Dendritic cell treated with granulocyte-macrophage colony-stimulating factor and Interleukin-4, amounts not matched to agents 40 ng/mL and 50 ng/mL, for 4 days (primary cell): ENCODE measurements at regions of chr4 and their contacts with region 1.

Region 1: DNA sequence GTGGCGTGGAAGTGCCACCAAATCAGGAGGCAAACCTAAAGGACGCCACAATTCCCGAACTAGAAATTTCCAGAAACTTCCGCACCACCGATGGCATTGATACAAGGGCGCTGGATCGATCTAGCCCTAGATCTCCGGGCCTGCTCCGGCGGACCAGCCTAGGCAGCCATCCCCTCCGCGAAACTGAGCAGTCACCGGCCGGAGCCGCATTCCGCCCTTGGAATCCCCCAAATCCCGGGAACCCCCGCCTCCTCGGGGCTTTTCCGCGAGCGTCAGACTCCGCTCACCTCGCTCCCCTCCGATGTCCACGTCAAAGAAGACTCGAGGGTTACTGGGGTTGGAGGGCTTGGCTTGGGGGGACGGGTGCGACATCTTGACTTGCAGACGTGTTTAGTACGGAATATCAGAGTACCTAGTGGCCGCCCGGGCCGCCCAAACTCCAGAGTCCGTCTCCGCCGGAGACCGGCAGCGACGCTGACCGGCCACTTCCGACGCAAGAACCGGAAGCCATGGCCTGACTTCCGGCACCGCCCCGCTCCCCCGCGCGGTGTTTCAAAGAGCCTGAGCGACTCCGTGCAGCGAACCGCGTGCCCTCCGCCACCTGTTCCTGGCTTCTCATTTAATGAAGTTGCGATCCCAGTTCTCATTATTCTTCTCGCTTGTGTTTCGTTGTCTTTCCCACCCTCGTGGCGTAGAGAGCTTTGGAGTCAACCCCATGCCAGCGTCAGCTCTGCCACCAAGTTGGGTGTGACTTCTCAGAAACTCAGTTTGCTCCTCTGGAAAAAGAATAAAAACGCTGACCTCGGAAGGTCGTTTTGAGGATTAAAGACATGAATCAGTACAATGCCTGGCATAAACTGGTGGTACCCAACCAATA is at the start of gene PPID:
- H3K4me3 Mint-ChIP-seq: peak within 1 kb of the TSS; percentile 95
- H3K27ac Mint-ChIP-seq: peak within 1 kb of the TSS; percentile 99
- H3K4me1 Mint-ChIP-seq: peaks cover 25% of the 10 kb centered on the region
- H3K27me3 Mint-ChIP-seq: no peaks in the 10 kb centered on the region

Region 2: DNA sequence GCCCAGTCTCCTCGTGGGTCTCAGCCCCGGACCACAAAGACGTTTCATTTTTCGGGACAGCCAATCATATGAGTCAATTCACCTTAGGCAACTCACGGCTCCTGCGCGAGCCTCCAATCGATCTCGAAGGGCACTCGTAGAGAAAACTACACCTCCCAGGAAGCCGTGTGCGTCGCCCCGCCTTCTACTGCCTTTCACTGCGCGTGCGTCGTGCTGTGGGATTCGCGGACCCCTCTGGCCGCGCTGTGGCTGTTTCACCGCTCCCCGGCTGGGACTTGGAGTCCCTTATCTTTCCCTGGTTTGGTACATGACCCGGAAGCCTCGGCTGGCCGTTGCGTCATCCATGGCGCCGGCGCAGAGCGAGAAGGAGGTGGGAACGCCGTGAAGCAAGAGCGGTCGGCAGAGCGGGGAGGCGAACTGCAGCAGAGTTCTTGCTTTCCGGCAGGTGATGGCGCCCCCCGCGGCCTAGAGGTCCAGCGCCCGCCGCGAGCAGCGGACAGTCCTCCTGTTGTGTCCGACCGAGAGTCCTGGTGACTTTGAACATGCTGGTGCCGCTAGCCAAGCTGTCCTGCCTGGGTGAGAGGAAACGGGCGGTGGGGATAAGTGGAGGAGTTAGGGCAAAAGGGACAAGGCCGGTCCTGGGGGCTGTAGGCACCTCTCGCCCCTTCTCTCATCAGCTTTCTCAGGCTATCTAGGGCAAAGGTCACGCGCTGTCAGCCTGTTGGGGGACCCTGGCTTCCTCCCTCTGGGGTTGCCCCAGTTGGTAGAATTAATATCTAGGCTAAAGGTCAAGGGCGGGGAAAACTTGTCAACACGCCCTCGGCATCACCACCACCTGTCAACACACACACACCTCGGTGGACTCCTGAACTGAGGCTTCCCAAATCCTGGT is 51.0 kb before region 1 on chr4 and contains the start of gene ETFDH:
- intact Hi-C with region 1: loop called (anchors 1 kb)
- H3K4me3 Mint-ChIP-seq: peak within 1 kb of the TSS; percentile 94
- H3K27ac Mint-ChIP-seq: peak within 1 kb of the TSS; percentile 96
- H3K4me1 Mint-ChIP-seq: peaks cover 18% of the 10 kb centered on the region
- H3K27me3 Mint-ChIP-seq: no peaks in the 10 kb centered on the region

Region 3: GRCh38 chr4:158688813-158689212 is 34.3 kb before region 1 on chr4:
- intact Hi-C with region 1: no loop called
- H3K4me3 Mint-ChIP-seq: no peak overlapping the region
- H3K27ac Mint-ChIP-seq: no peak overlapping the region
- H3K4me1 Mint-ChIP-seq: no peaks in the 10 kb centered on the region
- H3K27me3 Mint-ChIP-seq: no peaks in the 10 kb centered on the region

Region 4: DNA sequence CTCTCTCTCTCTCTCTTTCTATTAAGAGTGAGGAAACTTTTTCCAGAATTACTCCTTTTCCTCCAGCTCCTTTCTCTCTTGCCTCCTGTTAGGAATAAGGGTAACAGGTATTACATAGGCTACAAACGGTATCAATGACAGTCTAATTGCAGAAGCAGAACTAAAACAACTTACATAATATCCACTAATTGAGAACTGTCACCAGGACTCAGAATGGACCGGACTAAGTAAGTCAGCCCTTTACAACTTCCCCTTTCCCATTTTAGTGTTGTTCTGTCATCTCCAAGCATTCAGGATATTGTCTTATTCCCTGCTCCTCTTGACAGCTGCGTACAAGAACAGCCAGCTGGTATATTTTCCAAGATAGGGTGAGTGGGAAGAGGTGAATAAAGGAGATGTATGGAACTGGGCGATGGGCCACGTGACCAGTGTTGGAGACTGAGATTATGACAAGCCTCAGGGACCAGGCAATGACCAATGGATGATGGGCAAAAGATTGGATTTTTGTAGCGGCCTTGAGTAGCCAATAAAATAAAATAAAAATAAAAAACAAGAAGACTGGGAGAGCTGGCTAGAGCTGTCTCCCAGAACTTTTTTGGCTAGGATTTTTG is 43.4 kb after region 1 on chr4:
- intact Hi-C with region 1: loop called (anchors 2 kb)
- H3K4me3 Mint-ChIP-seq: peak overlapping the region; percentile 35
- H3K27ac Mint-ChIP-seq: peak overlapping the region; percentile 94
- H3K4me1 Mint-ChIP-seq: peaks cover 37% of the 10 kb centered on the region
- H3K27me3 Mint-ChIP-seq: peaks cover 4% of the 10 kb centered on the region

Region 5: GRCh38 chr4:158809611-158810486 is 86.7 kb after region 1 on chr4:
- intact Hi-C with region 1: loop called (anchors 2 kb)
- H3K4me3 Mint-ChIP-seq: peak overlapping the region; percentile 63
- H3K27ac Mint-ChIP-seq: peak overlapping the region; percentile 97
- H3K4me1 Mint-ChIP-seq: peaks cover 79% of the 10 kb centered on the region
- H3K27me3 Mint-ChIP-seq: no peaks in the 10 kb centered on the region

Region 6: GRCh38 chr4:159104694-159105414 is 381.7 kb after region 1 on chr4:
- intact Hi-C with region 1: loop called (anchors 5 kb)
- H3K4me3 Mint-ChIP-seq: peak overlapping the region; percentile 87
- H3K27ac Mint-ChIP-seq: peak overlapping the region; percentile 93
- H3K4me1 Mint-ChIP-seq: peaks cover 52% of the 10 kb centered on the region
- H3K27me3 Mint-ChIP-seq: peaks cover 21% of the 10 kb centered on the region